ENCODE measurements at regions of chr19 and their contacts with region 1.

Region 1: GRCh38 chr19:8355631-8356402 is 8.1 kb upstream of the ANGPTL4 start:
- DNase-seq: no peak
- H3K4me3 ChIP-seq: no peak overlapping the region
- H3K4me3 Mint-ChIP-seq: no peak overlapping the region
- H3K27ac ChIP-seq: no peak overlapping the region
- H3K27ac Mint-ChIP-seq: no peak overlapping the region
- H3K4me1 ChIP-seq: peaks cover 6% of the 10 kb centered on the region
- H3K4me1 Mint-ChIP-seq: peaks cover 2 to 4% (median 3%) of the 10 kb centered on the region in 3 donors
- H3K27me3 ChIP-seq: no peaks in the 10 kb centered on the region
- H3K27me3 Mint-ChIP-seq: peaks cover 14% of the 10 kb centered on the region in 2 donors

Region 2: DNA sequence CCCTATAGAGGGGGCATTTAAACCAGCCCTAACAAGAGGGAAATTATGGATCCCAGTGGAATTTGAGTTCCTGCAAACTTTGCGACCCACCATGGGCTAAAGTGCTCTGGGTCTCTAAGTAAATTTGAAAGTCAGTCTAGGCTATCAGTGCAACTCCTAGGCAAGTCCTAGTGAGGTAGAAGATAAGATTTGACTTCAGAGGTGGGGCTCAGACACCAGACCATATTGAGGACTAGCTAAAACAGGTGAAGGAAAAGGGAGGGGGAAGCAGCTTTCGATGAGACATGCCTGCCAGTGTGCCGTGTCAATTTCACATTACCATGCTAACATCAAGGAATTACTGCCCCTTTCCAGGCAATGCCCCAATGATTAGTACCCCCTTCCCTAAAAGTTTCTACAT is 86.1 kb before region 1 on chr19:
- CTCF ChIA-PET with region 1: interaction called, 10 read pairs
- POLR2A ChIA-PET with region 1: interaction called, 6 read pairs
- DNase-seq: no peak
- H3K4me3 ChIP-seq: peak overlapping the region; percentile 79
- H3K4me3 Mint-ChIP-seq: peak overlapping the region; percentile 91 to 99 (median 94)
- H3K27ac ChIP-seq: peak overlapping the region; percentile 63
- H3K27ac Mint-ChIP-seq: peak overlapping the region; percentile 93 to 98 (median 96)
- H3K4me1 ChIP-seq: peaks cover 7% of the 10 kb centered on the region
- H3K4me1 Mint-ChIP-seq: peaks cover 12 to 20% (median 17%) of the 10 kb centered on the region in 3 donors
- H3K27me3 ChIP-seq: no peaks in the 10 kb centered on the region
- H3K27me3 Mint-ChIP-seq: no peaks in the 10 kb centered on the region

Region 3: DNA sequence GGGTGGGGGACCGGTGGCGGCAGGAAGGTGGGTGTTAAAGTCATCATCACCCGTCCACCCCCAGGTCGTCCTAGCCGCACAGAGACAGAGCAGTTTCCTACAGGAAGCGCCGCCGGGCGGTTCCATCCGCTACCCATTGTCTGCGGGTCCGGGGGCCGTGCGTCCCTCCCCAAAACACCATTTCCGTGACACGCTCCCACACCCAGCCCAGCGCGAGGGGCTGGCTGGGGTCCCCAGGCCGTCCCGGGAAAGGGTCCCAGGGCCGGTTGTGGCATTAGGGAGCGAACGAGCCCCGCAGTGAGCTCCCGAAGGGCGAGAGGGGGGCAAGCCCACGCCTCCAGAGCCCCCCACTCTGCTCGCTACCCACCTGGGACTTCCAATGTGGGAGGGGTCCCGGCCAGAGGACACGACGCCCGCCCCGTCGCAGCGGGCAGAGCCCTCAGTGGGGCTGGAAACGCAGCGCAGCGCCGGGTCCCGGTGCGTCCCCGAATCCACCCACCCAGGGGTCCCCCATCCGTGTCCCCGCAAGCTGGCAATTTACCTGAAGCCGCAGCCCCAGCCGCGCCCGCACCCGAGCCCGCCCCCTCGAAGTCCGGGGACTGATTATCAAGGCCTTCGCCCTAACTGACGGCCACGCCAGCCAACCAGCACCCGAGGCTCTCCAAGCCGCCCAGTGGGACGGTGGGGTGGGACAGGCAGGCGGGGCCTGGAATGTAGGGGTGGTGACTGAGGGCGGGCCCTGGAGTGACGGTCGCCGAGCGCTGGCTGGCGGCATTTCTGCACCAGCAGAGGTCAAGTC is 12.9 kb before region 1 on chr19 and contains the start of gene KANK3:
- CTCF ChIA-PET with region 1: interaction called, 18 read pairs
- POLR2A ChIA-PET with region 1: no interaction called
- DNase-seq: peak; percentile 87 to 93 (median 90)
- H3K4me3 ChIP-seq: peak within 1 kb of the TSS; percentile 56
- H3K4me3 Mint-ChIP-seq: peak within 1 kb of the TSS; percentile 77 to 90 (median 81)
- H3K27ac ChIP-seq: peak within 1 kb of the TSS; percentile 47
- H3K27ac Mint-ChIP-seq: peak within 1 kb of the TSS in 5 of 8 donors; percentile 52 to 89 (median 84)
- H3K4me1 ChIP-seq: no peaks in the 10 kb centered on the region
- H3K4me1 Mint-ChIP-seq: peaks cover 10 to 18% (median 11%) of the 10 kb centered on the region in 3 donors
- H3K27me3 ChIP-seq: no peaks in the 10 kb centered on the region
- H3K27me3 Mint-ChIP-seq: peaks cover 6 to 9% of the 10 kb centered on the region in 2 donors
- total RNA-seq, gene KANK3: 0.97 to 1.1 TPM

Region 4: DNA sequence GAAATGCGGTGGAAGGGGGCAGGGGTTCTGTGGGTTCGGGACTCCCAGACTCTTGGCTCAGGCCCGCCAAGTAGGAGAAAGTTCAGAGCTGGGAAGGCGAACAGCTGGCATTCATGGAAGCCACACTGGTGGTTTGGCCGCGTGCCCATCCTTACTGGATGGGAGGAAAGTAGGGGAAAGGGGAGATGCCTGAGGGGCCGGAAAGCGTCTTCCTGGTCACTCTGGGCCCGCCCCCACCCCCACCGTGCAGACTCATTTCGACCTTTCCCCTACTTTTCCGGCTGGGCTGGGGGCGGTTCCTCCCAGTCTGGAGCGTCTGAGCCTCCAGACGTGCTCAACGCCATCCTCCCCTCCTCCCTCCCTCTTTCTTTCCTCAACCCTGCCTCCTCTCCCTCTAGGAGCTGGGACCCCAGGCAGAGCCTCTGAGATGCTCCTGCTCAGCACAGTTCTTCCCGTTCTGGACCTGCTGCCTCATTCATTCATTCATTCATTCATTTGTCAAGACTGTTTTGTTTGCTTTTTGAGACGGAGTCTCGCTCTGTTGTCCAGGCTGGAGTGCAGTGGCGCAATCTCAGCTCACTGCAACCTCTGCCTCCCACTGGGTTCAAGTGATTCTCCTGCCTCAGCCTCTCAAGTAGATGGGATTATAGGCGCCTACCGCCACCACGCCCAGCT is 11.6 kb after region 1 on chr19:
- CTCF ChIA-PET with region 1: interaction called, 11 read pairs
- POLR2A ChIA-PET with region 1: no interaction called
- DNase-seq: no peak
- H3K4me3 ChIP-seq: no peak overlapping the region
- H3K4me3 Mint-ChIP-seq: peak overlapping the region in 1 of 7 donors; percentile 48
- H3K27ac ChIP-seq: no peak overlapping the region
- H3K27ac Mint-ChIP-seq: no peak overlapping the region
- H3K4me1 ChIP-seq: peaks cover 5% of the 10 kb centered on the region
- H3K4me1 Mint-ChIP-seq: peaks cover 4 to 15% (median 14%) of the 10 kb centered on the region in 3 donors
- H3K27me3 ChIP-seq: peaks cover 7% of the 10 kb centered on the region
- H3K27me3 Mint-ChIP-seq: peaks cover 20 to 46% of the 10 kb centered on the region in 2 donors

Region 5: DNA sequence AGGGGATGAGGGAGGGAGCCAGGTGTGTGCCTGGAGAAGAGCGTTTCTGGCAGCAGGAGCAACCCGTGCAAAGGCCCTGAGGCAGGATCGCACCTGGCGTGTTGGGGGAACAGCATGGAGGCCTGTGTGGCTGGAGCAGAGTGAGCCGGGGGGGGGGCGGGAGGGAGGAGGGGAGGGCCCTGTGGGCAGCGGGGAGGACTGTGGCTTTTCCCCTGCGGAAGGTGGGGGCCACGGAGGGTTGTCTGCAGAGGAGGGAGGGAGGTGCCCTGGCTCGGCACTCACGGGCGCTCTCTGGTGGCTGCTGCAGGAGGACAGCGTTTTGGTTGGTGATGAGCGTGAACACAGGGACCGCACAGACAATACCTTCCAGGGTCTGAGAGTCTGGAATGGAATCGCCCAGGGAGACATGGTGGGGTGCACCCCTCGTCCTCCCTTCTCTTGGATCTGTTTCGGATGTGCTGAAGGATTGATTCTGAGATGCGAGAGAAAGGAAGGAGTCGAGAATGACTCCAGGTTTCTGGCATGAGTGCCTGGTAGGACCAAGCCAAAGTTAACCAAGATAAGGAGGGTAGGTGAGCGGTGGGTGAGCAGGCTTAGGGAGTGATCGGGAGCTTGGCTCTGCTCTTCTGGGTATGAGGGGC is 40.9 kb after region 1 on chr19:
- CTCF ChIA-PET with region 1: interaction called, 16 read pairs
- POLR2A ChIA-PET with region 1: no interaction called
- DNase-seq: peak; percentile 58 to 87 (median 74)
- H3K4me3 ChIP-seq: no peak overlapping the region
- H3K4me3 Mint-ChIP-seq: peak overlapping the region in 1 of 7 donors; percentile 58
- H3K27ac ChIP-seq: no peak overlapping the region
- H3K27ac Mint-ChIP-seq: peak overlapping the region in 7 of 8 donors; percentile 24 to 99 (median 74)
- H3K4me1 ChIP-seq: peaks cover 13% of the 10 kb centered on the region
- H3K4me1 Mint-ChIP-seq: peaks cover 26 to 60% (median 34%) of the 10 kb centered on the region in 3 donors
- H3K27me3 ChIP-seq: no peaks in the 10 kb centered on the region
- H3K27me3 Mint-ChIP-seq: no peaks in the 10 kb centered on the region

Region 6: GRCh38 chr19:8585894-8586750 is 230.3 kb after region 1 on chr19:
- CTCF ChIA-PET with region 1: interaction called, 31 read pairs
- POLR2A ChIA-PET with region 1: no interaction called
- DNase-seq: peak in 3 of 5 donors; percentile 59 to 80 (median 67)
- H3K4me3 ChIP-seq: no peak overlapping the region
- H3K4me3 Mint-ChIP-seq: no peak overlapping the region
- H3K27ac ChIP-seq: no peak overlapping the region
- H3K27ac Mint-ChIP-seq: no peak overlapping the region
- H3K4me1 ChIP-seq: no peaks in the 10 kb centered on the region
- H3K4me1 Mint-ChIP-seq: peaks cover under 1 to 5% (median 2%) of the 10 kb centered on the region in 3 donors
- H3K27me3 ChIP-seq: no peaks in the 10 kb centered on the region
- H3K27me3 Mint-ChIP-seq: no peaks in the 10 kb centered on the region

Measured in CD8-positive, alpha-beta memory T cell (primary cell).